Activated T-helper 1 cell treated with anti-CD3 and anti-CD28 coated beads, Interleukin-12 subunit alpha, Interleukin-12 subunit beta, Interleukin-2, Interleukin-4 antibody, amounts not matched to agents 30 ng/mL and 10 ng/mL and 1 ng/mL, durations not matched to agents 14 hours and 24 hours and 36 hours (primary cell): ENCODE measurements at regions of chr10 and their contacts with region 1.

Region 1: GRCh38 chr10:110774069-110775019 is 97.4 kb upstream of the PDCD4 start:
- DNase-seq: peak; percentile 57
- H3K4me3 Mint-ChIP-seq: peak overlapping the region; percentile 53
- H3K27ac Mint-ChIP-seq: peak overlapping the region; percentile 96
- H3K4me1 Mint-ChIP-seq: peaks cover 62% of the 10 kb centered on the region
- H3K27me3 Mint-ChIP-seq: peaks cover 4% of the 10 kb centered on the region

Region 2: GRCh38 chr10:110210674-110211464 is 563.5 kb before region 1 on chr10:
- intact Hi-C with region 1: loop called (anchors 1 kb)
- DNase-seq: peak; percentile 92
- H3K4me3 Mint-ChIP-seq: peak overlapping the region; percentile 96
- H3K27ac Mint-ChIP-seq: peak overlapping the region; percentile 95
- H3K4me1 Mint-ChIP-seq: peaks cover 70% of the 10 kb centered on the region
- H3K27me3 Mint-ChIP-seq: peaks cover 10% of the 10 kb centered on the region

Region 3: DNA sequence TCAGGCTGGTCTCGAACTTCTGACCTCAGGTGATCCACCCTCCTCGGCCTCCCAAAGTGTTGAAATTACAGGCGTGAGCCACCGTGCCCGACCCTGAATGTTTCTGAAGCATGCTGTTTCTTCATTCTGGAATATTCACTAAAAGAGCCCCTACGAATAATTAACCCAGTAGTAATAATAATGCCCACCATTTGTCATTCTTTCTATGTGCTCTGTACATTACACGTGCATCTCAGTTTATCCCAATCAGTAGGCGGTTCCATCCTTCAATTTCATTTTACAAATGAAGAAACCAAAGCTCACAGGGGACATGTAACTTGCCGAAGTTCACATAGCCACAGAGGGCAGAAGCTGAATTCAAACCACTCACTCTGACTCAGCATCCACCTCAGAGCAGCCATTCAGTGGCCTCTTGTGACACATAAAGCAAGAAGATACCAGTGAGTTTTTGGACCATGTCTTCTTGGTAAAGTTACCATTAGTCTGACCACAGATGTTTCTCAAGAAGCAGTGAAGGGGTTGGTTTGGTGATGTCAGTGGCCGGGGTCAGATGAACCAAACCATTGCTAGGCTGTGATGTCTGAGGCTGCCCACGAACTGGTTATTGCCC is 348.6 kb before region 1 on chr10:
- intact Hi-C with region 1: loop called (anchors 10 kb)
- DNase-seq: peak; percentile 53
- H3K4me3 Mint-ChIP-seq: peak overlapping the region; percentile 34
- H3K27ac Mint-ChIP-seq: peak overlapping the region; percentile 91
- H3K4me1 Mint-ChIP-seq: peaks cover 70% of the 10 kb centered on the region
- H3K27me3 Mint-ChIP-seq: no peaks in the 10 kb centered on the region

Region 4: DNA sequence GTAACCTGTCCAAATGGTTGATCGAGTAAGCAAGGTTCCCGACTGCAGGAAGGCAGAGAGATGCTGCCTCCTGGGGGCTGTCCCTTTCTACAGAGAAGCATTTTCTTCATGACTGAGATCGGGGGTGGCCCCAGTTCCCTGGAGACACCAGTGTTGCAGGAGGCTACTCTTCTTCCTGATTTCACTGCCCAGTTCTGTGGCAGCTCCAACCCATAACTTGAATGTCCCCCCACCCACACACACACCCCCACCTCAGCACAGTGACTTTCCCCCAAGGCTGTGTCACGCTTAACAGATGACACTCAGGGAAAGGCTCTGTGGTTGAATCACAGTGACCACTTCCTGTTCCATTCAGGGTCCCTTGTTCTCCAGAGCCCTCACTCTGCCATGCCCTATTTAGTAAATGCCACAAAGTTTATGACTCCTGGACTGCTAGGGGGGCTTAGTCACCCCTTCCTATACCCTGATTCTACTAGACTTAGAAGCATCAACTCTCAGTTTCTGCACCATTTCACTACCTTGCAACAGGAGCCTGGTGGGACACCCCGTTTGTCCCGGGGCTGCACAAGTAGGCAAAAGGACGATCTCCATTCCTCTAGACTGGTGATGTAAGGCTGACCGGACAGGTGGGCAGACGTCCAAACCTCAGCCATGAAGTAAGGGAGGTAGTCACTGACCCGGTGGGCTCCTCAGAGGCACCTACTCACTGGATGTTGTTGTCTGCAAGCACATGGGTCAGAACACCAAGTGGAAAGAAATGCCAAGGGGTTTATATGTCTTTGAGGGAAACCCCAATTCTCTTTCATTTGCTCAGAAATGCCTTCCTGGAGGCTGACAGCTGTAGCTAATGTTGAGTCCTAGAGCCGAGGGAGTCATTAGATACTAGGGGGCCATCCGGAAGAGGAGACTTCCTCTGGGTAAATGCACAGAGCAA is 238.1 kb before region 1 on chr10:
- intact Hi-C with region 1: loop called (anchors 2 kb)
- DNase-seq: peak; percentile 49
- H3K4me3 Mint-ChIP-seq: peak overlapping the region; percentile 48
- H3K27ac Mint-ChIP-seq: peak overlapping the region; percentile 89
- H3K4me1 Mint-ChIP-seq: peaks cover 60% of the 10 kb centered on the region
- H3K27me3 Mint-ChIP-seq: no peaks in the 10 kb centered on the region

Region 5: GRCh38 chr10:110758898-110759297 is 15.4 kb before region 1 on chr10:
- intact Hi-C with region 1: no loop called
- DNase-seq: no peak
- H3K4me3 Mint-ChIP-seq: no peak overlapping the region
- H3K27ac Mint-ChIP-seq: no peak overlapping the region
- H3K4me1 Mint-ChIP-seq: peaks cover 10% of the 10 kb centered on the region
- H3K27me3 Mint-ChIP-seq: peaks cover 5% of the 10 kb centered on the region

Region 6: DNA sequence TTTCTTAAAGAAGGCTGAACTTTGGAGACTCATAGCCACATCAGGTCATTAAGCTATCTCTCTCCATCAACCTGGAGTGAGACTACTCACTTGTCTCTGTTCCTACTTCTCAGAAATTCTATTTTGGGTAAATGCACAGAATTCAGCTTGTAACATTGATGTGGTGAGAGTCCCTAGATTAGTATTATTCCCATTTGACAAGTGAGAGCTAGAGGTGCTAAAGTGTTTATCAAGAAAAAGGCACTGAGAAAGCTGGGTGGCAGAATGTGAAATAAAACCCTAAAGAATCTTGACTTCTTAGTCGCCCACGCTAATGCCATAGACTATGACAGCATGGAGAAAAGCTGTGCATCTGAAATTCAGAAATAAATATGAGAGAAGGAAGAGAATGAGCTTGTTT is 24.0 kb after region 1 on chr10:
- intact Hi-C with region 1: loop called (anchors 1 kb)
- DNase-seq: no peak
- H3K4me3 Mint-ChIP-seq: no peak overlapping the region
- H3K27ac Mint-ChIP-seq: peak overlapping the region; percentile 83
- H3K4me1 Mint-ChIP-seq: peaks cover 24% of the 10 kb centered on the region
- H3K27me3 Mint-ChIP-seq: peaks cover 4% of the 10 kb centered on the region

Region 7: DNA sequence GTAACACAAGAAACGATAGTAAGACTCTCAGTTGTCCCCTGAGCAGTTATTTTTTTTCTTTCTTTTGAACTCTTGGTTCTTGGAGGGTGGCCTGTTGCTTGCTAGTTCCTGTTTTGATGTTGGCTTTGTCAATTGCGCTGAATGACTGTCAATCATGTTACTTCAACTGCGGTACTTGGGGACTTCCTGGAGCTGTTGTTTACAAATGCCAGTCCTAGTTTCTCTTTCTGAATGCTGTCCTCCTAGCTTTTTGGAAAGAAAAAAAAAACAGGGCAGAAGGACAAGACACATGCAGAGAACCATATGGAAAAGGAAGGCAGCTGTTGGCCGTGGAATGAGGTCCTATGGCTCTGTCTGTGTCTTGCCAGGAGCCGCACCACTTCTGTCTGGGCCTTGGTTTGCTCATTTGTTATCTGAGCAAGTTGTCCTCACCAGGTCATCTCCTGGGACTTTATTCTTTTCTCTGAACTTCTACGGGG is 90.4 kb after region 1 on chr10:
- intact Hi-C with region 1: loop called (anchors 1 kb)
- DNase-seq: peak; percentile 69
- H3K4me3 Mint-ChIP-seq: peak overlapping the region; percentile 75
- H3K27ac Mint-ChIP-seq: peak overlapping the region; percentile 95
- H3K4me1 Mint-ChIP-seq: peaks cover 96% of the 10 kb centered on the region
- H3K27me3 Mint-ChIP-seq: no peaks in the 10 kb centered on the region

Region 8: DNA sequence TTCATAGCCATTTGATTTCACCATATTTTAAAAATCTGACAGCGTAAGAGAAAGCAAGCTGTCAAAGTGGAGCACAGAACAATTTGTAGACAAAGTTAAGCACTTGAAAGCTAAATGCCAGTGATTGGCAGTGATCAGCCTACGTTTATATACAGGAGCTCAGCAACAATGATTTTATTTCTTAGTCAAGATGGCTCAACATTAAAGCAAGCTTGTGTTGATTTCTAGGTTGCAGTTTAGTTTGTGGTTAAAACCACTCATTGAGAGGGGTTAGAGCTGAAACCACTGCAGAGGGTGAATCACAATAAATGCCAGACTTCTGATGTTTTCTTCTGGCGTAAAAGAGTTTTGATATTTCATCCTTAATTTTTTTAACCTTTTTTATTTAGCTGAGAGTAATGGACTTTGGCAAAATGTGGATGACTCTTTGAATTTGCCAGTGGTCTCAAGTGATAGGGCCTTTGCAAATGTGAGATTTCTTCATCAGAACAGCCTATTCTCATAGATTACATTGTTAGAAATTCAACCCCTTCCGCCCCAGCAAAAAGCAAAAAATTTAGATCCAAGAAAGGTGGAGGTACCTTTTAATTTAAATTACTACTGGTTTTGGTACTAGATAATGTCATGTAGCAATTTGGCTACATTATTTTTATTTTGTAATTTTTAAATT is 218.8 kb after region 1 on chr10:
- intact Hi-C with region 1: loop called (anchors 2 kb)
- DNase-seq: peak; percentile 21
- H3K4me3 Mint-ChIP-seq: peak overlapping the region; percentile 63
- H3K27ac Mint-ChIP-seq: no peak overlapping the region
- H3K4me1 Mint-ChIP-seq: peaks cover 43% of the 10 kb centered on the region
- H3K27me3 Mint-ChIP-seq: no peaks in the 10 kb centered on the region